Lower leg skin (tissue), 4 donors: ENCODE measurements at regions of chr9 and their contacts with region 1.

Region 1: GRCh38 chr9:127586537-127586936 is 25.5 kb upstream of the STXBP1 start:
- DNase-seq: peak; percentile 85 to 95
- H3K4me3 ChIP-seq: no peak overlapping the region
- CTCF ChIP-seq: peak in 1 of 3 donors; percentile 59
- POLR2A ChIP-seq: no peak

Region 2: GRCh38 chr9:127253446-127253845 is 333.1 kb before region 1 on chr9:
- intact Hi-C with region 1: no loop called
- DNase-seq: no peak
- H3K4me3 ChIP-seq: no peak overlapping the region
- CTCF ChIP-seq: no peak
- POLR2A ChIP-seq: no peak

Region 3: DNA sequence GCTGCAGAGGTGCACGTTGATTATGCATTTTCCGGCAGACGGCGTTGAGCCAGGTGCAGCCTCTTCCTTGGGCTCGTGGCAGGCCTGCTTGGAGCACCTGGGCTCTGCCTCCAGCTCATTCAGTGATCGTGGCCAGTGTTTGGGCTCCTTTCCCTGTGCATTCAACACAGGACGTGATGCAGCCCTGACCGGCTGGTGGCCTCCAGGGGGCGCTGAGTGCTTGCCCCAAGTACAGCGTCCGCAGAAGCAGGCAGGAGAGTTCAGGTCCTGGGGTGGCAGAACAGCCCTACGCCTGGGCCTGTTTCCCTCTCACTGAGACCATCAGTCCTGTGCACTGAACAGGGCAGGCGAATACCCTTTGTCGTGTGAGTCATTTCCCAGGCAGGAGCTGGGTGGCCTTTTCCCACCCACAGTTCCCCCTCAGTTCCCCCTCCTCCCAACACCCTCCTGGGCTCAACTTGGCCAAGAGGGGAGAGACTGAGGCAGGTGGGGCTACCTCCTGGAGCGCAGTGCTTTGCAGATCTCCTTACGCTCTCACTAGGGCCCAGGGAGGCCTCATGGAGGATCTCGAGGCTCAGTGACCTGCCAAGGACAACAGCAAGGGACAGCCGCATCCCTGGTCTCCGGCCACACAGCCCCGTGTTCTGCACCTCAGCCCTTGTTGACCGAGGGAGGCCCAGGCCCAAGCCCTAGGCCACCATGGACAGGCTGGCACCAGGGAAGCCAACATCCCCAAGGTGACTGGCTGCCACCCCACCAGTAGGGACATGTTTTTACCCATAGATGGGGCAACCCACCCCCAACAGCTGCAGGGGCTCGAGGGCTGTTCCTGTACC is 82.4 kb before region 1 on chr9:
- intact Hi-C with region 1: loop called (anchors 5 kb)
- DNase-seq: peak; percentile 80 to 96
- H3K4me3 ChIP-seq: no peak overlapping the region
- CTCF ChIP-seq: peak in 1 of 3 donors; percentile 82
- POLR2A ChIP-seq: no peak

Region 4: DNA sequence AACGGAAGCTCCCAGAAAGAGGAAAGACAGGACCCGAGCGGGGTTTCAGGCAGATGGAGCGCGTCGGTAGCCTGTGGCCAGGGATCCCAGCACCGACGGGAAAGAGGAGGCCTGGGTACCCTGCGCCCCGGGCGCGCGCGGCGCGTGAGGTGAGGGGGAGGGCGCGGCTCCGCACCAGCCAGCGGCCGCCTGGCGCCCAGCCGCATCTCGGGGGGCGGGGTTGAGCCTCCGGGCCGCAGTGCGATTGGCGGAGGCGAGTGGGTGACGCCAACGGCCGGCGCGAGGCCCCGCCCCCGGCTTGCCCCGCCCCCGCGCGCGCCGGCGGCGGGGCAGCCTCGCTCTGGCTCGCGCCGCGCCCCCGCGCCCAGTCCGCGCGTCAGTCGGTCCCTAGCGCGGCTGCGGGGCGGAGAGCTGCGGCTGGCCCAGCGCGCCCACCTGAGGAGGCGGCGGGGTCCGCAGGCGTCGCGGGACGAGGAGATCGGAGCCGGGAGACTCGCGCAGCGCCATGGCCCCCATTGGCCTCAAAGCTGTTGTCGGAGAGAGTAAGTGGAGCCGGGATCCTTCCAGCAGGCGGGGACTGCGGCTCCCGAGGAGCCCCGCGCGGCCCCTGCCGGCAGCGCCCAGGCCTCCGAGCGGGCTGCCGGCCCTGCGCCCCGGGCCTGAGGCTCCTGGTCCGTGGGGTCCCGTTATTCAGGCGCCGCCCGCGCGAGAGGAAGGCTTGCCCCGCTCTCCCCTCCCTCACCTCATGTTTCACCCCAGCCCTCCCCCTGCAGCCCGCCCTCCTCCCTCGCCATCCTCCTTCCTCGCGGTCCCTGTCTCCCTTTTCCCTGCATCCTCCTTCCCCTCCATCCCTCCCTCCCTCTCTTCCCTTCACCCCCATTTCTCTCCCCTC is 25.6 kb after region 1 on chr9 and contains the start of gene STXBP1:
- intact Hi-C with region 1: no loop called
- DNase-seq: peak; percentile 75 to 97
- H3K4me3 ChIP-seq: peak within 1 kb of the TSS; percentile 66
- CTCF ChIP-seq: no peak
- POLR2A ChIP-seq: no peak
- total RNA-seq, gene STXBP1: 17.4 to 66.8 (median 30.5) TPM